ENCODE measurements at regions of chr11 and their contacts with region 1.

Region 1: GRCh38 chr11:65117216-65118096 is at the start of gene ZNHIT2:
- DNase-seq: peak; percentile 100
- H3K4me3 Mint-ChIP-seq: peak within 1 kb of the TSS; percentile 90
- H3K27ac Mint-ChIP-seq: peak within 1 kb of the TSS; percentile 95
- H3K4me1 Mint-ChIP-seq: peaks cover 69% of the 10 kb centered on the region
- H3K27me3 Mint-ChIP-seq: no peaks in the 10 kb centered on the region
- total RNA-seq, gene ZNHIT2: 8.1 to 8.6 TPM

Region 2: GRCh38 chr11:64778508-64779346 is 338.7 kb before region 1 on chr11 and contains the start of gene SF1:
- CTCF ChIA-PET with region 1: interaction called, 6 read pairs
- POLR2A ChIA-PET with region 1: interaction called, 14 read pairs
- DNase-seq: peak; percentile 100
- H3K4me3 Mint-ChIP-seq: peak within 1 kb of the TSS; percentile 86
- H3K27ac Mint-ChIP-seq: peak within 1 kb of the TSS; percentile 100
- H3K4me1 Mint-ChIP-seq: peaks cover 57% of the 10 kb centered on the region
- H3K27me3 Mint-ChIP-seq: no peaks in the 10 kb centered on the region
- total RNA-seq, gene SF1: 385 to 390 TPM

Region 3: DNA sequence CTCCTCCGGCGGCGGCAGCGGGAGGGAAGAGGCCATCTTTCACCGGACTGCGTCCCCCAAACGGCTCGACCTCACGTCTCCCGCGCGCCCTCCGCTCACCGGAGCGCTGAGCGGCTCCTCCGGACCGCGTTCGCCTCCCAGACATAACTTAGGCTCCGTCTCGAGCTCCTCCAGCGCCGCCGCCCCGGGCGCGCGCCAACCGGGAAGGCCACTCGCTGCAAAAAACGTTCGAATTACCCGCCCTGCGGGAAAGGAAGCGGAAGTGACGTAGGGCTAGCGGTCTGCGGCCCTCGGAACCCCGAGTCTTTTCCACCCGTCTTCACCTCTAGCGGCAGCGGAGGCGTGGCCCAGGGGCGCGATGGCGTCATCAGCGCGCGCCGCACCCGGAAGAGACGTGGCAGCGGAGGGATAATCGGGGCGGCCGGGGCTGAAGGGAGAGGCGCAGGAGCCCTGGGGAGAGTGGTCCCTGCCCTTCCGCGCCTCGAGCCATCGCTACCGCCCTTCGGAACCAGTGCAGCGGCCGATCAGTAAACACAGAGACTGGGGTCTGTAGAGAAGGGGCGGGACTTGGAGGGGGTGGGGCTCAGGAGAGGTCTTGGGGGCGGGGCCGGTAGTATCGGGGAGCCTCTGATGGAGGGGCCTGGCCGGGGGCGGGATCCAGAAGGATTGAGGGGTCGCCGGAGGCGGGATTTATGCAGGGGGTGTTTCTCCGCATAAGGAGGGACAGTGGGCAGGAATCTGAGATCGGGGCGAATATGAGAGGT is 33.4 kb before region 1 on chr11 and contains the starts of genes CDCA5 and ZFPL1:
- CTCF ChIA-PET with region 1: interaction called, 8 read pairs
- POLR2A ChIA-PET with region 1: interaction called, 24 read pairs
- DNase-seq: peak; percentile 96
- H3K4me3 Mint-ChIP-seq: peak within 1 kb of the TSS; percentile 91
- H3K27ac Mint-ChIP-seq: peak within 1 kb of the TSS; percentile 88
- H3K4me1 Mint-ChIP-seq: peaks cover 62% of the 10 kb centered on the region
- H3K27me3 Mint-ChIP-seq: no peaks in the 10 kb centered on the region
- total RNA-seq, gene CDCA5: 98.2 to 104 TPM
- total RNA-seq, gene ZFPL1: 30.1 to 31.6 TPM

Region 4: DNA sequence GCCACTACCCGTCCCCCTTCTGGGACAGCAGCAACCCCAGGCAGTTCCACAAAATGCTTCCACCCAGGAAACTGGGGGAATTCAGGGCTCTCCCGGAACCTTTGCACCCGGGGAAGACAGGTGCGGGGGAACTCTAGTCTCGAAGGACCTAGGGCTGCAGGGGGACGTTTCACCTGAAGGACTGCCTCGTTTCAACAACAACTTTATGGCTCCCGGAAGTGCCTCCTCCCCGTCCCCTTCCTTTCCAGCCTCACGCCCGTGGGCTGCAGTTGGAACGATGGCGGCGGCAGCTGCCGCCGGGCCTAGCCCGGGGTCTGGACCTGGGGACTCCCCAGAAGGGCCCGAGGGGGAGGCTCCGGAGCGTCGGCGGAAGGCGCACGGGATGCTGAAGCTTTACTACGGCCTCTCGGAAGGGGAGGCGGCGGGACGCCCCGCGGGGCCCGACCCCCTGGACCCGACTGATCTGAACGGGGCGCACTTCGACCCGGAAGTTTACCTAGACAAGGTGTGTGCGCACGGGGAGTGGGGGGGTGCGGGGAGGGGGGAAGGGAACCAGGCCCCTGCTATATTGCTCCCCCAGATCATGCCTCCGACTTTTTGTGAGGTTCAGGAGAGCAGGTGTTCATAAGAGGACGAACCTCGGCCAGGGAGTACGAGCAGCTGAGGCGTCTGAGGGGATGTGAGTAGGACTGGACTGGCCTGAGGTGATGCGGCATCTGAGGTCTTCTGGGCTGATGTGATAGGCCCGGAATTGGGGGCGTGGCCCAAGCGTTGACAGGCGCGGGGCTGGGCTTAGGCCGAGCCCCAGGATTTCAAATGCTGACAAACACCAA is 21.3 kb before region 1 on chr11 and contains the start of gene VPS51:
- CTCF ChIA-PET with region 1: interaction called, 89 read pairs
- POLR2A ChIA-PET with region 1: interaction called, 83 read pairs
- DNase-seq: peak; percentile 91
- H3K4me3 Mint-ChIP-seq: peak within 1 kb of the TSS; percentile 97
- H3K27ac Mint-ChIP-seq: peak within 1 kb of the TSS; percentile 96
- H3K4me1 Mint-ChIP-seq: peaks cover 25% of the 10 kb centered on the region
- H3K27me3 Mint-ChIP-seq: no peaks in the 10 kb centered on the region
- total RNA-seq, gene VPS51: 117 to 123 TPM

Region 5: GRCh38 chr11:65128148-65129145 is 11.0 kb after region 1 on chr11:
- CTCF ChIA-PET with region 1: interaction called, 17 read pairs
- POLR2A ChIA-PET with region 1: interaction called, 157 read pairs
- DNase-seq: no peak
- H3K4me3 Mint-ChIP-seq: no peak overlapping the region
- H3K27ac Mint-ChIP-seq: no peak overlapping the region
- H3K4me1 Mint-ChIP-seq: peaks cover 26% of the 10 kb centered on the region
- H3K27me3 Mint-ChIP-seq: no peaks in the 10 kb centered on the region

Region 6: DNA sequence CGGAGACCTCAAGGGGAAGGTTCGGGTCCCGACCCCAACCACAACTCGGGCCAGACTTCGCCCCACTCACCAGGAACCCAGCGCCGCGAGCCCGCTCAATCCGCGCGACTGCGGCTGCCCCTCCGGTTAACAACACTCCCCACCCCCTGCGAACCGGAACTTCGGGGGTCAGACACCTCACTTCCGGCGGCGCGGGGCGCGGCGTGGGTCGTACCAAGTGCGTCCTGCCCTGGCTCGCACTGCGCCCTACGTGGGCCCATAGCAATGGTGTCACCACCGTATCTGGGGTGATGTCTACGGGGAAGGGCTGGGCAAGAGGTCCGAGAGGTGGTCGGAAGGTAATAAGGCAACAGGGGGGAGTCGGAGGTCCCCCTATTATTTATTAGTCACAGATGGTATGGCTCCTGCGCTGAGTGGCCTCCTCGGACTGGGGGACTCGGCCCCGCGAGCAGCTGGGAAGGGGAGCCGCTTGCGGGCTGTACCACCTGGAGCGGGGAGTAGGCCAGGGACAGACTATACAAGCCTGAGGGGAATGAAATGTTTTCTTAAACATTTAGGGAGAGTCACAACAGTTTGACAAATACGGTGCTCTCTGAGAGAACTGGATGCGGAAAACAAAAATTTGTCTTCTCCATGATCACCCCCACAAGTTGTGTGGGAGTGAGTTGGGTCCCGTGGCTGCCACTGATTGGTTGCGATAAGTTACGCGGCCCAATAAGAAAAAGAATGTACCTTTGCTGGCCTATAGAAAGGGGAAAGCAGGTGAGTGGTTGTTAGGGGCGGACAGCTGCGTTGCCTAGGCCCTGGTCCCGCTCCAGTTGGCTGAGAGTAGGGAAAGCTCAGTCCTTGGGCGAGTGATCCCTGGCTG is 17.2 kb after region 1 on chr11 and contains the start of gene SYVN1:
- CTCF ChIA-PET with region 1: interaction called, 25 read pairs
- POLR2A ChIA-PET with region 1: interaction called, 157 read pairs
- DNase-seq: peak; percentile 92
- H3K4me3 Mint-ChIP-seq: peak within 1 kb of the TSS; percentile 98
- H3K27ac Mint-ChIP-seq: peak within 1 kb of the TSS; percentile 98
- H3K4me1 Mint-ChIP-seq: peaks cover 35% of the 10 kb centered on the region
- H3K27me3 Mint-ChIP-seq: no peaks in the 10 kb centered on the region
- total RNA-seq, gene SYVN1: 39.4 to 42.2 TPM

Region 7: DNA sequence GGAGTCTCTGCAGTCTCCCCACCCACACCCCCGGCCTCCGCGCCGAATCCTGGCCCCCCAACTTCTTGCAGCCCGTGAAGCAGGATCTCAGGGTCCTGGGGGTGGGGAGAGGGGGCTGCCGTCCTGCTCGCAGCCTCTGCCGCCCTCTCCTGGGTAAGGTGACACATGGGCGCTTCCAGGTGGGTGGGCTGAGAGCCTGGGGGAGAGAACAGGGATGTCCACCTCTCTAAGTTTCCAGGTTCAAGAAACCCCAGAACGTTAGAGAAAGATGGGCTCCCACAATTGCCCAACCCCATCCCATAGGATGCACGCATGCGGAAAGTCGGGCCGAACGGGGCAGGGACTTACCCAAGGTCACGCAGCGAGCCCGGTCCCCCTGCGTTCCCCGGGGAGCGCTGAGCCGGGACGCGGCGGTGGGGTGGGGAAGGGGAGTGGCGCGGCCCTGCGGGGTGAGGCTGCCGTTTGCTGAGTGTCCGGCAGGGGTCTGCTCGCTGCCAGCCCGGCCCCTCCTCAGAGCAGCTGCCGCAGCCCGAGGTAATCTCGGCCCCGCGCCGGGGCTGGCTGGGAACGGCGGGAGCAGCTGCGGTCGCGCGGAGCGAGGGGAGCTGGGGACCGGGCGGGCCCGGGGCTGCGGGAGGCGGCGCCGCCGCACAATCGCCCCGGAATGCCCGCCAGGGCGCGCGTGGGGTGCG is 63.6 kb after region 1 on chr11:
- CTCF ChIA-PET with region 1: interaction called, 3 read pairs
- POLR2A ChIA-PET with region 1: interaction called, 18 read pairs
- DNase-seq: peak; percentile 65
- H3K4me3 Mint-ChIP-seq: peak overlapping the region; percentile 95
- H3K27ac Mint-ChIP-seq: peak overlapping the region; percentile 65
- H3K4me1 Mint-ChIP-seq: peaks cover 25% of the 10 kb centered on the region
- H3K27me3 Mint-ChIP-seq: no peaks in the 10 kb centered on the region